ENCODE measurements at regions of chr14 and their contacts with region 1.

Region 1: DNA sequence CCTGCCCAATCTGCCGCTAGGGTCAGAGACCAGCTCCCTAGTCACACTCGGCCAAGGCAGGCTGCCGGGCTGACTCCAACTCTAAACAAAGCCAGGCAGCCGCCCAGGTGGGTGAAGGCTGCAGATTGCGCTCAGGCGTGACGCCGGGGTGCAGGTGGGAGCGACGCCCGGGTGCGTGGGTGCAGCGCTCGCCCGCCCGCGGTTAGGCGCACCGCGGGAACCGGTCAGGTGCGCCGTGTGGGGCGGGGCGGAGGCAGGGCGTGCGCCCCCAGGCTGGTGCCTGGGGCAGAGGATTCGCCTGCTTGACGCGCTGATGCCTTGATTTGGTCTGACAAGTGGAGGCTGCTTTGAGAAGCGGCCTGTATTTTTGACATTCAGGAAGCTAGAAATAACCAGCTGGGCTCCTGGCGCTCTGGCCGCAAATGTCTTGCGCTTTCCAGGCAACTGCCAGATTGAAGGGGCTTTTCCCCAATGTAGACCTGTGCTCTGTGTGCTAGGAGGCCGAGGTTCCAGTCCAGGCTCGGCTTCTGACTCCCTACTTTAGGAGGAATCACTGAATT is 126.7 kb upstream of the HIF1A start:
- DNase-seq: peak; percentile 98
- H3K4me3 ChIP-seq: peak overlapping the region; percentile 53
- H3K27ac ChIP-seq: peak overlapping the region; percentile 93
- H3K4me1 ChIP-seq: peaks cover 77% of the 10 kb centered on the region
- CTCF ChIP-seq: peak; percentile 65

Region 2: DNA sequence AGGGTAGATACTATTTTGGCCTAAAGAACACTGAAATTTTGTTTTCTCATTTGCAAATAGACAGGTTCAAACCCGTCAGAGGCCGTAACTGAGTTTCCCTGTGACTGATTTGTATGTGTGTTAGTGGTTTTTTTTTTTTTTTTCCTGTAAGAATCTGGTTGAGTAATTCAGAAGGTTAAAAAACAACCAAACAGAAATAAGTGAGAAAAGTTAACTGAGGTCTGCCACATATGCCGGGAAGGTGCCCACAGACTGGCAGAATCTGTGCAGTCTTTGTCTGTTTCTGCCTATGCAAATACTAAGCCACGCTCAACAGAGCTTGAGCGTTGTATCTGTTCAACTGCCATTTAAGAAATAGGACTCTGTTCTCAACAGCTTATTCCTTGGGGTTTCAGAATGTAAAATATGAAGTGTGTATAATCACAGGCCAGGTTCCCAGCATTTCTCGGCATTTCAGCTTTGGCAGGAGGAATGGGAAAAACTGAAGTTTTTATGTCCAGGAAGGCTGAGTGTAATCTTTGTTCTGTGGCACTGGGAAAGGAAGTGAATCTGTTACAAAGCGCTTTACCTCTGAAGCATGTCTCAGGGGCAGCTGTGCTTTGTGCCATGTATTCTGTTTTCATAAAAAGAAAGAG is 65.4 kb before region 1 on chr14:
- CTCF ChIA-PET with region 1: interaction called, 3 read pairs
- POLR2A ChIA-PET with region 1: interaction called, 25 read pairs
- intact Hi-C with region 1: loop called (anchors 1 kb)
- DNase-seq: peak; percentile 94
- H3K4me3 ChIP-seq: peak overlapping the region; percentile 52
- H3K27ac ChIP-seq: peak overlapping the region; percentile 99
- H3K4me1 ChIP-seq: peaks cover 99% of the 10 kb centered on the region
- CTCF ChIP-seq: no peak; the same call in 1 of the 2 replicates

Region 3: DNA sequence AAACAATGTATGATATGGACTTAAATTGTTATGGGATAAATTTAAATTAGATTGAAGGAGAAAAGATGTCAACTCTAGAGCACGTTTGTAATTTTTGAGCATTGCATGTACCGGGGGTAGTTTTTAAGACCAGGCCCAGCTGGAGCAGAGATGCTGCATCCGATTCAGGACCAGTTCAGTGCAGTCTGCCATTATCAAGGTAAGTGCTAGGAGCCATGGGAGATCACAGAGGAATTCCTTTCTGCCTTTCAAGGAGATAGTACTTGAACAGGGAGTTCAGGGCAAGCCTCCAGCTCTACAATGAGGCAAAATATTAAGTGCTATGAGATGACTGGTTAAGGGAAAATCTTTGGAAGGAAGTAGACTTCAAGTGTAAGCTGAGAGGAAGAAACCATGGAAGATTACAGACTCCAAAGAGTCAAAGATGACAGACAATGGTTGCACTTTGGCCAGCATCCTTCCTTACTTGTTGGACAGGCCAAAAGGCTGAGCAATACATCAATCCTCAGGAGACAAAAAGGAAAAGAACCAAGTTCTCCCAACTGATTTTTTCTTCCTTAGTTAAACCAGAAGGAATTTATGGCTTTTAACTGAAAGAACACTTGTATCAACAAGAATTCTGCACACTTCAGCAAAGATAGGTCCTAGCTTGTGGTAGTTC is 13.4 kb after region 1 on chr14:
- CTCF ChIA-PET with region 1: interaction called, 3 read pairs
- POLR2A ChIA-PET with region 1: interaction called, 19 read pairs
- intact Hi-C with region 1: no loop called
- DNase-seq: no peak
- H3K4me3 ChIP-seq: no peak overlapping the region
- H3K27ac ChIP-seq: no peak overlapping the region
- H3K4me1 ChIP-seq: peaks cover 12% of the 10 kb centered on the region
- CTCF ChIP-seq: no peak

Region 4: GRCh38 chr14:61710853-61711817 is 142.5 kb after region 1 on chr14:
- CTCF ChIA-PET with region 1: no interaction called
- POLR2A ChIA-PET with region 1: interaction called, 3 read pairs
- intact Hi-C with region 1: loop called (anchors 5 kb)
- DNase-seq: peak; percentile 46
- H3K4me3 ChIP-seq: peak overlapping the region; percentile 18
- H3K27ac ChIP-seq: peak overlapping the region; percentile 9
- H3K4me1 ChIP-seq: peaks cover 76% of the 10 kb centered on the region
- CTCF ChIP-seq: no peak

Region 5: GRCh38 chr14:62168564-62169155 is 600.0 kb after region 1 on chr14:
- CTCF ChIA-PET with region 1: no interaction called
- POLR2A ChIA-PET with region 1: no interaction called
- intact Hi-C with region 1: no loop called
- DNase-seq: no peak
- H3K4me3 ChIP-seq: no peak overlapping the region
- H3K27ac ChIP-seq: no peak overlapping the region
- H3K4me1 ChIP-seq: no peaks in the 10 kb centered on the region
- CTCF ChIP-seq: peak; percentile 35; the same call in 1 of the 2 replicates

Region 6: DNA sequence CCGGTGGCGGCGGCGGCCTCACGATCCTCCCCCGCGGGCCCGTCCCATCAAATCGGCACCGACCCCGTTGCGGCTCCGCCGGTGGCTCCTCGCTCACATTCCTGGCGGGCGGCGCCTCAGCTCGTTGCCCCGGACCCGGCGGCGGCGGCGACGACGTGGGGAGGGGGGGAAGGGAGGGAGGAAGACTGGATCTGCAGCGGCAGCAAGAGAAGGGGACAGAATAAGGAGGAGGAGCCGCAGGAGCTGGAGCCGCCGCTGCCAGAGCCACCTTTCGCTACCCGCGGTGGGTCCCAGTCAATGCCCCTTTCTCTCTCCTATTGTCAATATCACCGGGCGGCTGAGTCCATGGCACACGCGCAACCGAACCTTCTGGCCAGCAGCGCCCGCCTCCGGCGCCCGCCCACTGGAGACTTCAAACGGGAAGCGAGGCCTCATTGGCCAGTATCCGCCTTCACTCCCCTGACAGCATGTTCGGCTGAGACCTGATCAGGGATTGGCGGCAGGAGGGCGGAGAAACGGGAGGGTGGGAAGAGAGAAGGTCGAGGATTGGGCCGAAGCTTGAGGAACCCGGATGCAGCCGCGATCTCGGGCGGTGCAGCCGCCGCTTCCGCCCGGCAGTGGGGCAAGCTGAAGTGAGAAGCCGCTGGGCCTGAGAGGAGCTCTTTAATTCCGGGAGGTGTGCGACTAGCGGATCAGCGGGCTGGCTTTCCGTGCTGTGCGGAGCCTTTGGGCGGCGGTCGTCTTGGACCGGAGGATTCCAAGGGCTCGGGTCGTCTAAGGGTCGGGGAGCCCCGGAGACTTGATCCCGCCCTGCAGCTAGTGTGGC is 1974.6 kb after region 1 on chr14 and contains the start of gene PPP2R5E:
- CTCF ChIA-PET with region 1: interaction called, 11 read pairs
- POLR2A ChIA-PET with region 1: no interaction called
- intact Hi-C with region 1: no loop called
- DNase-seq: peak; percentile 98
- H3K4me3 ChIP-seq: peak within 1 kb of the TSS; percentile 92
- H3K27ac ChIP-seq: peak within 1 kb of the TSS; percentile 70
- H3K4me1 ChIP-seq: peaks cover 25% of the 10 kb centered on the region
- CTCF ChIP-seq: no peak
- total RNA-seq, gene PPP2R5E: 10.1 and 12.5 TPM in 2 replicates